ENCODE measurements at regions of chr21 and their contacts with region 1.

Region 1: DNA sequence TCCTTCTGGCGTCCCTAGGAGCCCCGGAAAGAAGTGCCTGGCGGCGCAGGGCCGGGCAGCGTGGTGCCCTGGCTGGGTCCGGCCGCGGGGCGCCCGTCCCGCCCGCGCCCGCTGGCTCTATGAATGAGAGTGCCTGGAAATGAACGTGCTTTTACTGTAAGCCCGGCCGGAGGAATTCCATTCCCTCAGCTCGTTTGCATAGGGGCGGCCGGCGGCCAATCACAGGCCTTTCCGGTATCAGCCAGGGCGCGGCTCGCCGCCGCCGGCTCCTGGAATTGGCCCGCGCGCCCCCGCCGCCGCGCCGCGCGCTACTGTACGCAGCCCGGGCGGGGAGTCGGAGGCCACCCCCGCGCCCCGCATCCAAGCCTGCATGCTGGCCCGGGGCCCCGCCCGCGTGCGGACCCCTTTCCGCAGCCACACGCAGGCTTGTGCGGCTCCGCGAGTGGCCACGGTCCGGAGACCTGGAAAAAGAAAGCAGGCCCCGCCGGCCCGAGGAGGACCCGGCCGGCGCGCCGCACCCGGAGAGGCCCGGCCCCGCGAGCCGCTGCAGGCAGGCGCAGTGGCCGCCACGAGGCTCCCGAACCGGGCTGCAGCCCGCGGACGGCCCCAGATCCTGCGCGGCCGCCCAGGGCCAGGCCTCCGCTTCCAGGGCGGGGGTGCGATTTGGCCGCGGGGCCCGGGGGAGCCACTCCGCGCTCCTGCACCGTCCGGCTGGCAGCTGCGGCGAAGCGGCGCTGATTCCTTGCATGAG is 160.4 kb downstream of the RUNX1 start:
- DNase-seq: no peak
- ATAC-seq: peak; percentile 68
- H3K4me3 ChIP-seq: peak overlapping the region; percentile 72
- H3K27ac ChIP-seq: peak overlapping the region; percentile 68
- H3K4me1 ChIP-seq: peaks cover 5% of the 10 kb centered on the region
- H3K27me3 ChIP-seq: peaks cover 3 to 9% of the 10 kb centered on the region in 2 experiments
- CTCF ChIP-seq: no peak
- EP300 ChIP-seq: no peak
- POLR2A ChIP-seq: peak; percentile 69
- RAD21 ChIP-seq: no peak

Region 2: GRCh38 chr21:33703750-33704606 is 1184.8 kb before region 1 on chr21:
- CTCF ChIA-PET with region 1: no interaction called
- POLR2A ChIA-PET with region 1: no interaction called
- RAD21 ChIA-PET with region 1: no interaction called
- SMC1A ChIA-PET with region 1: no interaction called
- in situ Hi-C with region 1: no loop called
- intact Hi-C with region 1: no loop called
- DNase-seq: no peak
- ATAC-seq: no peak
- H3K4me3 ChIP-seq: no peak overlapping the region
- H3K27ac ChIP-seq: no peak overlapping the region
- H3K4me1 ChIP-seq: no peaks in the 10 kb centered on the region
- H3K27me3 ChIP-seq: no peaks in the 10 kb centered on the region
- CTCF ChIP-seq: no peak
- EP300 ChIP-seq: no peak
- POLR2A ChIP-seq: no peak
- RAD21 ChIP-seq: no peak

Region 3: GRCh38 chr21:34801519-34802132 is 87.1 kb before region 1 on chr21:
- CTCF ChIA-PET with region 1: interaction called, 4 read pairs
- POLR2A ChIA-PET with region 1: no interaction called
- RAD21 ChIA-PET with region 1: interaction called, 8 read pairs
- SMC1A ChIA-PET with region 1: interaction called, 5 read pairs
- in situ Hi-C with region 1: no loop called
- intact Hi-C with region 1: loop called (anchors 2 kb)
- DNase-seq: no peak
- ATAC-seq: peak; percentile 80
- H3K4me3 ChIP-seq: no peak overlapping the region
- H3K27ac ChIP-seq: no peak overlapping the region
- H3K4me1 ChIP-seq: peaks cover 9% of the 10 kb centered on the region; the same call in 1 of the 2 replicates
- H3K27me3 ChIP-seq: no peaks in the 10 kb centered on the region
- CTCF ChIP-seq: peak; percentile 66 to 73 (median 72)
- EP300 ChIP-seq: no peak
- POLR2A ChIP-seq: no peak
- RAD21 ChIP-seq: peak; percentile 84

Region 4: GRCh38 chr21:34874684-34875513 is 13.8 kb before region 1 on chr21:
- CTCF ChIA-PET with region 1: interaction called, 10 read pairs
- POLR2A ChIA-PET with region 1: no interaction called
- RAD21 ChIA-PET with region 1: interaction called, 8 read pairs
- SMC1A ChIA-PET with region 1: interaction called, 10 read pairs
- in situ Hi-C with region 1: no loop called
- intact Hi-C with region 1: no loop called
- DNase-seq: no peak
- ATAC-seq: peak; percentile 89
- H3K4me3 ChIP-seq: peak overlapping the region; percentile 56; the same call in 1 of the 2 replicates
- H3K27ac ChIP-seq: peak overlapping the region; percentile 75
- H3K4me1 ChIP-seq: peaks cover 8% of the 10 kb centered on the region
- H3K27me3 ChIP-seq: no peaks in the 10 kb centered on the region
- CTCF ChIP-seq: no peak
- EP300 ChIP-seq: no peak
- POLR2A ChIP-seq: no peak
- RAD21 ChIP-seq: no peak

Region 5: DNA sequence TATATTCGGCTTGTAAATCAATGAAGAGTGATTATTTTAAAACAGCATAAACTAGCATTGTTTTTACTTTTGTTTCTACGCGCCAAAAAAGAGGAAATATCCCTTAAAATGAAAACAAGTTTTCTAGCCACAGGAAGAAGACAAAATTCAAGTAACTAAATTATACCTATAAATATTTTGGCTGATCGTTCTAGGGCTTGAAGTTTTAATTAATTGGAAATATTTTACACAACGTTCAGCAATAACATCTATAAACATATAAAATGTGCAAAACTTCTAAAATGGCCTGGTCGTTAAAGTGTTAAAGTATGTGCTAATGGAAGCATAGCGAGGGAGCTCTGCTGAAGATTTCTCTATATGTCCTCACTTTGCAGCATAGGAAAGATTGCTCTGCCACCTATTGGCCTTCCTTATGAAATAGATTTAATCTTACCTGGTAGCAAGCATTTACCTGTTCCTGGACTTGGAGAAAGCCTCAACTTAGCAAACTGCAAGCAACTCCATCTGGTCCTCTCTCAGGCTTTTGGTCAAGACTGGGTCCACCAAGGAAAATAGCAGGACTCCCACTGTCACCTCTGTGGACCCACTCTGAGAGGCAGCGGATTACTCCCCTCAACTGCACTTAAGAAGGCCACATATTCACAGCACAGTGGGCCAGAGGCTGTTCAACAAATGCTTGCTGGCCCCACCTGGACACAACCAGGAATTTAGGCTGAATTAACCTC is 511.7 kb after region 1 on chr21:
- CTCF ChIA-PET with region 1: interaction called, 6 read pairs
- POLR2A ChIA-PET with region 1: no interaction called
- RAD21 ChIA-PET with region 1: interaction called, 4 read pairs
- SMC1A ChIA-PET with region 1: interaction called, 4 read pairs
- in situ Hi-C with region 1: no loop called
- intact Hi-C with region 1: loop called (anchors 1 kb)
- DNase-seq: peak; percentile 19
- ATAC-seq: peak; percentile 71
- H3K4me3 ChIP-seq: no peak overlapping the region
- H3K27ac ChIP-seq: no peak overlapping the region
- H3K4me1 ChIP-seq: no peaks in the 10 kb centered on the region
- H3K27me3 ChIP-seq: peaks cover 0 to 3% of the 10 kb centered on the region in 2 experiments; a peak in 3 of 4 replicates
- CTCF ChIP-seq: peak; percentile 35 to 72 (median 53); a peak in 5 of 6 replicates
- EP300 ChIP-seq: no peak
- POLR2A ChIP-seq: no peak
- RAD21 ChIP-seq: peak; percentile 92

Region 6: DNA sequence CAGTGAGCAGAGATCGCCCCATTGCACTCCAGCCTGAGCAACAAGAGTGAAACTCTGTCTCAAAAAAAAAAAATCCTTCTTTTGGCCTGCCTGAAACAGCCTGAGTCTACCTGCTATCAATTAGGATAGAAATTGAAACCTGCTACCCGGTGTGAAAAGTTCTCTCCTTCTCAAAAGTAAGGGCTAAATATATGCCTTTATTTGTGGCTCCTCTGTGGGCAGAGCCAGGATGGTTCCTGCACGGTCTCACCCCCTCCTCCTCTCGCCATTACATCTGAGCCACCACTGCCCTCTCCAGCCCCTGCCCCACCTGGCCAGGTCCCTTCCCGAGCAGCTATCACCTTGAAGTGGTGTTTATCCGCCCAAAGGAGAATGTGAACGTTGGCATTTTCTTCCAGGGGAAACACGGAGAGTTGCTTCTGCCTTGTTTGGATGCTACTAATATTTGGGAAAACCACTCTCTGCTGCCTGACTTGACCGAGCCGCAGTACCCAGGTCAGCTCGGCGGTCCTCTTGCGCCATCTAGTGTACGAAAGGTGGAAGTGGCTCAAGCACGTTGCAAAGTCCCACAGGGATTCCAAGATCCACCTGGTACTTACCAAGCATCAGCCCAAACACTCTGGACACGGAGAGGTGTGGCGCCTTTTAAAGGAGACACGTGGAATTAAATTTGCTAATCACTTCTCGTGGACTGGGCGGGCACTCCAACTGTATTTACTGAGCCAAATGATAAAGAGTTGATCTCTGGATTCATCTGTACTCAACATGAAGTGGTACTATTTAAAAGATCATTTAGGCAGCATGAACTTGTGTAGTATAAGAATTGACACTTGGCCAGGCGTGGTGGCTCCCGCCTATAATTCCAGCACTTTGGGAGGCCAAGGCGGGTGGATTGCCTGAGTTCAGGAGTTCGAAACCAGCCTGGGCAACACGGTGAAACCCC is 1139.7 kb after region 1 on chr21:
- CTCF ChIA-PET with region 1: interaction called, 3 read pairs
- POLR2A ChIA-PET with region 1: no interaction called
- RAD21 ChIA-PET with region 1: interaction called, 4 read pairs
- SMC1A ChIA-PET with region 1: no interaction called
- in situ Hi-C with region 1: no loop called
- intact Hi-C with region 1: loop called (anchors 10 kb)
- DNase-seq: peak; percentile 23
- ATAC-seq: peak; percentile 97
- H3K4me3 ChIP-seq: no peak overlapping the region
- H3K27ac ChIP-seq: no peak overlapping the region
- H3K4me1 ChIP-seq: peaks cover 5% of the 10 kb centered on the region
- H3K27me3 ChIP-seq: no peaks in the 10 kb centered on the region
- CTCF ChIP-seq: peak; percentile 94 to 98 (median 97)
- EP300 ChIP-seq: no peak
- POLR2A ChIP-seq: no peak
- RAD21 ChIP-seq: peak; percentile 95

Measured in GM12878 (cell line).